Activated naive CD4-positive, alpha-beta T cell treated with anti-CD3 and anti-CD28 coated beads, Interleukin-2, amount 10 ng/mL, durations not matched to agents 7 days and 5 days (primary cell): ENCODE measurements at regions of chr17 and their contacts with region 1.

Region 1: GRCh38 chr17:50087246-50087911 is 7.8 kb upstream of the PDK2 start:
- DNase-seq: peak; percentile 84
- H3K4me3 Mint-ChIP-seq: no peak overlapping the region
- H3K27ac Mint-ChIP-seq: no peak overlapping the region
- H3K4me1 Mint-ChIP-seq: no peaks in the 10 kb centered on the region
- H3K27me3 Mint-ChIP-seq: no peaks in the 10 kb centered on the region

Region 2: DNA sequence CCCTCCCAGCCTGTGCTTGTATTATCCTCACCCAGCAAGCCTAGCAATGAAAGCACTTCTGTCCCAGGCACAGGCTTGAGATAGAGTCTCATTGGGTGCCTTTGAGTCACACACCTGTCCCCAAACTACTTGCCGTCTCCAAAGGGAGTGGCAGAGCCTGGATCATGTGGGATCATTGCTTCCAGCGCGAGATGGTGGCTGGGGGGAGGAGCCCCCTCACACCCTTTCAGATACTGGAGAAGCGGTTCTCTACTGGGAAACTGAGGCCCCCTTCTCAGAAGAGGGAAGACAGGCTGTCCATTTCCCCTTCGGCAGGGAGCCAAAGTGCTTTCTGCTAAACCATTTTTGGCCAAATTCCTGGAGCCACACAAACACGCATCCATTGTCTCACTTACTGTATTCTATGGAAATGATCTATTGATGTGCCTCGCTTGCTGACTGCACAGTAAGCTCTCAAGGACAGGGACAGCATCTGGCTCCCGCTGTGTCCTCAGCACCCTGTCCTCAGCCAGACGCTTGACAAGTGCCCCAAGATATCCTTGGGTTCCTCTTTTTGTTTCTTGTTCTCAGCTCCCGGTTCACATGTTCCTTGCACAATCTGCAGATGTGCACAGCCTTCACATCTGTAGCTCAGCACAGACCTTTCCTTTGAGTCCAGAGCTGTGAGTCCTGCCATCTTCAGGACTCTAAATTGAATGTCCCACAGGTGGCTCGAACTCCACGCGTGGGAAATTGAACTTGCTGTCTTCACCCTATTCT is 66.4 kb before region 1 on chr17:
- CTCF ChIA-PET with region 1: interaction called, 111 read pairs
- DNase-seq: no peak
- H3K4me3 Mint-ChIP-seq: no peak overlapping the region
- H3K27ac Mint-ChIP-seq: no peak overlapping the region
- H3K4me1 Mint-ChIP-seq: no peaks in the 10 kb centered on the region
- H3K27me3 Mint-ChIP-seq: peaks cover 35% of the 10 kb centered on the region

Region 3: GRCh38 chr17:50026901-50027630 is 60.3 kb before region 1 on chr17:
- CTCF ChIA-PET with region 1: interaction called, 111 read pairs
- DNase-seq: peak; percentile 82
- H3K4me3 Mint-ChIP-seq: no peak overlapping the region
- H3K27ac Mint-ChIP-seq: no peak overlapping the region
- H3K4me1 Mint-ChIP-seq: peaks cover 18% of the 10 kb centered on the region
- H3K27me3 Mint-ChIP-seq: peaks cover 50% of the 10 kb centered on the region

Region 4: GRCh38 chr17:50056231-50056960 is 31.0 kb before region 1 on chr17:
- CTCF ChIA-PET with region 1: interaction called, 12 read pairs
- DNase-seq: peak; percentile 76
- H3K4me3 Mint-ChIP-seq: peak overlapping the region; percentile 83
- H3K27ac Mint-ChIP-seq: no peak overlapping the region
- H3K4me1 Mint-ChIP-seq: peaks cover 27% of the 10 kb centered on the region
- H3K27me3 Mint-ChIP-seq: peaks cover 32% of the 10 kb centered on the region